GM13976 (cell line): ENCODE measurements at regions of chr2 and their contacts with region 1.

Region 1: DNA sequence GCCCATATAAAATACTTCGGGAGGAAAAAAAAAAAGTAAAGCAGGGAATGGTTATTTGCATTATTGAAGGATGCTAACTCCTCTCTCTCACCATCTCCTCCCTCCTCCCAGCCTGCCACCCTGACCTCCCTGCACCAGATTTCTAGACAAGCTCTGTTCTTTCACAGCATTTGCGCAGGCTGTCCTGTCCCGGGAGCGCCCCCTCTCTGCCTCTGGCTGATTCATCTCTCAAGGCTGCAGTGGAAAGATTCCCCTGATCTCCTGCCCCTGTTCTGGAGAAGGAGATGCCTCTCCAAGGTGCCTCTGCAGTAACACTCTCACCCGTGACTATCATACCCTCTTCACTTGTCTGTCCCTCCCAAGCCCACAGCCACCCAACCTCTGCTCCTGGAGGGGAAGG is 38.5 kb downstream of the COL4A4 start:
- DNase-seq: no peak
- CTCF ChIP-seq: no peak

Region 2: DNA sequence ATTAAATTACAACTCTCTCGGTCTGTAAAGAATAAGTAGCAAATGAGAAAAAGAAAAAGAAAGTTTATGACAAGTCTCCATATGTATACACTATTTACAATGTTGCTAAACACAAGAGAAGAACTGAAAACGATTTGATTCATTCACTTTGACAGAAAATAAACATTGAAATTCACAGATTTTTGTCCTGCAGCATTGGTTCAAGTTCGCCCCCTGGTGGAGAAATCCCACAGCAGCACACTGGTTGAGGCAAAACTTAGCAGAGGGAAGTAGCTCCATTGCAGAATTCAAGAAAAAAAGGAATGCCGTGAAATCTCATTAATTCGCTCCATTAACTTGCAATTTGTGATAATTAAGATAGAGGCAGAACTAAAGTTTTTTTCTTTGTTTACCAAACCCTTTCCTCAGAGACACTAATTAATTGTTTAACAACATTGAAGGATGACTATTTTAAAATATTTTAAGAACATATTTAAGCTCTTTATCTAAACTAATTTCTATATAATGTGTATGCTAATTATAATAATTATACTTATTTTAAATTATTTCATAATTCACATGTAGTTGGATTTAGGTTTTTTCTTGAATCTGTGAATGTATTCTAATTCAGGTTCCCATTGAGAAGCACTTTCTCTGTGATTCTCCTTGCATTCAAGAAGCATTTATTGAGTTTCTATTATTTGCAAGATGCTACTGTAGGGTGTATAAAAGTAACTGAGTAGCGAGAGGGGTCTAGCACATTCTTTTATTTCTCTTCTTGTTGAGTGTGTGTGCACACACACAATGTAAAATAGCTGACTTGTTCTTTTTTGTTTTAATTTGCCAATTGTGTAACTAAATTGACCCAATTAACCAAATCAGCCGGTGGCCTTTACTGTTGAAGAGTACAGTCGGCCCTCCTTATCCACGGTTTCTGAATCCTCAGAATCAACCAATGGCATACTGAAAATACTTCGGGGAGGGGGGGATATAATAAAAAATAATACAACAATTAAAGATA is 113.0 kb after region 1 on chr2:
- in situ Hi-C with region 1: loop called (anchors 25 kb)
- DNase-seq: peak; percentile 52
- CTCF ChIP-seq: peak; percentile 82

Region 3: DNA sequence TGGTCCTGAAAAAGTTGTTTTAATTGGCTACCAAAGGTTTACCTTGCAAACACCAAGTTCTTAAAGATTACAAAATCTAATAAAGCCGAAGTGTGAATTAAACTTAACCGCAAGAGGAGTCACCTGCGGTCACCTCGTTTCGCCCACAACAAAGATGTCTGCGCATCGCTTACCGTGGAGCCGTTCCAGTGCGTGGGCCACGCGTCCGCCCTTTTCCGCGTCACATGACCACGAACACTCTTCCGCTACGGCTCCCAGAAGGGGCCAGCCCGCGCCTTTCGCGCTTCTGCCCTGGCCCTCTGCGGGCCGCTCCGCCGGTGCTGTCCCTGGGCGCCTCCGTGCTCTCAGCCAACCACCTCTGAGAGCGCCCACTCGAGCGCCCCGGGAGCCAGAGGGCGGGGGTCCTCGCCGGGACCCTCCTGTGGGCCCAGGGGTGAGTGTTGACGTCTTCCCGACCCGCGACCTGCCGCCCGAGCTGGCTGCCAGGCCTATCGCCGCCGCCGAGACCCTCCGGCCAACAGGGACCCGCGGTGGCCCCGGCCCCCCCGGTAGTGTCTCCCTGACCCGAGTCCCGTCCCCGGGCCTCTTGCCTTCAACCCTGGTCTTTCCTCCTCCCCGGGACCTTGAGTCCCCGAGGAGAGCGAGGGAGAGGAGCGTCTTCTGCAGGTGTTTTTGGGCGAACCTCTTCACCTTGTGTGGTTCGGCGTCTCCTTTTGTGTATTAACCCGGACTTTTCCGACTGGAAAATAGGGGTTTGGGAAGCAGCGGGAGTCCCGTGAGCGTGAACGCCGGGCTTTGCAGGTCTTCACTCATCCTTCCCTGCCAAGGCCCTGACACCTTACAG is 199.7 kb after region 1 on chr2 and contains the start of gene MFF:
- in situ Hi-C with region 1: no loop called
- DNase-seq: peak; percentile 95
- CTCF ChIP-seq: peak; percentile 50